CD14-positive monocyte (primary cell): ENCODE measurements at regions of chr2 and their contacts with region 1.

Region 1: GRCh38 chr2:173373290-173373689 is 18.6 kb downstream of the CDCA7 start:
- DNase-seq: no peak
- H3K4me3 ChIP-seq: no peak overlapping the region
- H3K4me3 Mint-ChIP-seq: no peak overlapping the region
- H3K27ac ChIP-seq: no peak overlapping the region
- H3K27ac Mint-ChIP-seq: no peak overlapping the region
- H3K4me1 ChIP-seq: no peaks in the 10 kb centered on the region
- H3K4me1 Mint-ChIP-seq: peaks cover 5% of the 10 kb centered on the region
- H3K27me3 ChIP-seq: no peaks in the 10 kb centered on the region
- H3K27me3 Mint-ChIP-seq: no peaks in the 10 kb centered on the region
- CTCF ChIP-seq: no peak

Region 2: GRCh38 chr2:173326806-173327205 is 46.5 kb before region 1 on chr2:
- intact Hi-C with region 1: loop called in 1 of 2 experiments (anchors 2 kb)
- DNase-seq: no peak
- H3K4me3 ChIP-seq: no peak overlapping the region
- H3K4me3 Mint-ChIP-seq: no peak overlapping the region
- H3K27ac ChIP-seq: no peak overlapping the region
- H3K27ac Mint-ChIP-seq: no peak overlapping the region
- H3K4me1 ChIP-seq: no peaks in the 10 kb centered on the region
- H3K4me1 Mint-ChIP-seq: no peaks in the 10 kb centered on the region
- H3K27me3 ChIP-seq: no peaks in the 10 kb centered on the region
- H3K27me3 Mint-ChIP-seq: peaks cover 0 to 6% (median 4%) of the 10 kb centered on the region in 3 donors
- CTCF ChIP-seq: no peak